ENCODE measurements at regions of chr11 and their contacts with region 1.

Region 1: DNA sequence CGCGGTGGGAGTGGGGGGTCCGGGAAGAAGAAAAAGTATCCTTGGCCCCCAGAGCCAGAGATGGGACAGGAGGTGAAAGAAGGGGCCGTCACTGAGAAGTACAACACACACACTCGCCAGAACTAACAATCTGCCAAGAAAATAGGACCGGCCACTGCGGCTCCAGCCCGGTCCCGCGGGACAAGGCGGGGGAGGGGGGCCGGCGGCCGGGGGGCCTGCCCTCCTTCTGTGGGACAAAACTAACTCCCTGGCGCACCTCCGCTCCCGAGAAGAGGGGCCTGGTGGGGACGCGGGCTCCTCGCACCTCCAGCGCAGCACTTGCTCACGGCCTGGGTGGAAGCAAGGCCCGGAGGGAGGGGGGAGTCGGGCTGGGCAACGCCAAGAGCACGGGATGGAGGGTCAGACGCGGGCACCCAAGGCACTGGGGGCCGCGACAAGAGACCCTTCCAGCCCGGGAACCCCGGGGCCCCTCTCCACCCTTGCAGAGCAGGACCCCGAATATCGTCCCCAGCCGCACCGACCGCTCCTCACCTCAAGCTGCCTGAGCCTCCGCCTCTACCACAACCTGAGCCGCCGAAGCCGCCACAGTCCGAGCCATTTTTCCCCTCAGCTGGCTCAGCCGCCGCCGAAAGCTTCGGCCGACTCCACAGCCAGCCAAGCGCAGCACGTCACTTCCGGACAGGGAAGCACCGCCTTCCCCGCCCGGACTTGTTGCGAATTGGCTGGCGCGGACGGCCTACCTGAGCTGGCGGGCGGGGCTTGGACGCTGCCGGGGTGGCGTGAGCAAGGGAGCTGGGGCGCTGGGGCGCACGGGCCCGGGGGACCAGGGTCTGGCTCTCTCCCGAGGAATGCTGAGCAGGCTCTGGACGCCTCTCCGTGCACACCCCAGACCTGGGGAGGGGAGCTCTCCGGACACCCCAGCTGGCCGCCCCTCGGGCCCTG is at the start of gene PIK3C2A:
- DNase-seq: peak; percentile 97
- CTCF ChIP-seq: no peak

Region 2: DNA sequence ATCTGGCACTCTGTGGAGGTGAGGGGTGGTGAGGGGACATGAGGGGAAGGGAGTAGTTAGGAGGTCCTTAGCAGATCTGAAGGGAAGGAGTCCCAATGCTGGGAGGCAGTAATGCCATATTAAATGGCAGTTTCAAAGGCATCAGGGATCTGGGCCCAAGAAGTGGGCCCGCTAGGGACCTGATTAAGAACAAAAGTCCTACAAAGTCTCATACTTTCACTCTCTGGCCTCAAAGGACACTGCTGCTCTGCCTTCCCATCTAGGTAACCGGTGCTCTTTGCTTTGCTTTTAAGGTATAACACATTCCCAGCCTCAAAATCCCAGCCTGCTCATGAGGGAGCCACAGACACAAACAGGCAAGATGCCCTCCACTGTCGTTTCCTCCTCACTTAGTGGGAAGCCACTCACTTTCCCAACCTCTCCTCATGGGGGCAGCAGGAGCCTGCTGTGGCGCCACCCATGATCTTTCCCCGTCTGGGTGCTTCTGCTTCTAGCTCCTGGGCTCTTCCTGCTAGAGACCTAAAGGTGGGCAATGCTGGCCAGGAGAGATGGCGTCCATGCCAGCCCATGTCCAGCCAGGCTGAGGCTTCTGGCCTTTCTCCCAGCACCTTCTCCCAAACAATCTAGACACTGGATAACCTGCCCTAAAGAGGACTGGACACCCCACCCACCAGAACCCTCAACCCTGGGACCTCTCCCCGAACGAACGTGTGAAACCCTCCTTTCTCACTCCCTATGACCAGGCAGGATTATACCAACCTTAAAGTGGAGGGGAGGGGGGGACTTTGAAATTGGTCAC is 261.7 kb before region 1 on chr11:
- in situ Hi-C with region 1: loop called (anchors 25 kb)
- DNase-seq: peak; percentile 75
- CTCF ChIP-seq: peak; percentile 80

Measured in GM13976 (cell line).